ENCODE measurements at regions of chr9 and their contacts with region 1.

Region 1: GRCh38 chr9:5851445-5851844 is 18.5 kb upstream of the ERMP1 start:
- DNase-seq: peak; percentile 65
- ATAC-seq: peak; percentile 87
- H3K4me3 Mint-ChIP-seq: no peak overlapping the region
- H3K27ac Mint-ChIP-seq: peak overlapping the region; percentile 44
- H3K4me1 Mint-ChIP-seq: peaks cover 42% of the 10 kb centered on the region
- H3K27me3 Mint-ChIP-seq: no peaks in the 10 kb centered on the region

Region 2: GRCh38 chr9:5402217-5402616 is 449.2 kb before region 1 on chr9:
- CTCF ChIA-PET with region 1: no interaction called
- POLR2A ChIA-PET with region 1: no interaction called
- intact Hi-C with region 1: no loop called
- DNase-seq: no peak
- ATAC-seq: no peak
- H3K4me3 Mint-ChIP-seq: no peak overlapping the region
- H3K27ac Mint-ChIP-seq: no peak overlapping the region
- H3K4me1 Mint-ChIP-seq: peaks cover 19% of the 10 kb centered on the region
- H3K27me3 Mint-ChIP-seq: no peaks in the 10 kb centered on the region

Region 3: DNA sequence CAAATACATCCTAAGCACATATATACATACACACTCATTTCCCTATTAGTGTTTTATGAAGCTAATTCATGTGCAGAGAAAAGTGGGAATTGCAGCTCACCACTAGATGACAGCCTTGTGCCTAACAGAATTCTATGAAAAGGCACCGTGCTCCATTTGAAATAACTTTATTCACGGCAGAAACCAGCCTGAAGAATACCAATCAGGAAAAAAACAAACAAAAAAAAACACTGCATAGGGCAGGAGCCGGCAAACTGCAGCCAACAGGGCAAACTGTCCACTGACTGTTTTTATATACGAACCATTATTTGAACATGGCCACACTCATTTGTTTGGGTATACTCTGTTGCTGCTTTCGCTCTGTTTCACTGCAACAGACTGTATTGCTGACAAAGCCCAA is 52.1 kb before region 1 on chr9:
- CTCF ChIA-PET with region 1: no interaction called
- POLR2A ChIA-PET with region 1: no interaction called
- intact Hi-C with region 1: loop called in 1 of 2 experiments (anchors 5 kb)
- DNase-seq: no peak
- ATAC-seq: no peak
- H3K4me3 Mint-ChIP-seq: no peak overlapping the region
- H3K27ac Mint-ChIP-seq: no peak overlapping the region
- H3K4me1 Mint-ChIP-seq: peaks cover 22% of the 10 kb centered on the region
- H3K27me3 Mint-ChIP-seq: no peaks in the 10 kb centered on the region

Region 4: DNA sequence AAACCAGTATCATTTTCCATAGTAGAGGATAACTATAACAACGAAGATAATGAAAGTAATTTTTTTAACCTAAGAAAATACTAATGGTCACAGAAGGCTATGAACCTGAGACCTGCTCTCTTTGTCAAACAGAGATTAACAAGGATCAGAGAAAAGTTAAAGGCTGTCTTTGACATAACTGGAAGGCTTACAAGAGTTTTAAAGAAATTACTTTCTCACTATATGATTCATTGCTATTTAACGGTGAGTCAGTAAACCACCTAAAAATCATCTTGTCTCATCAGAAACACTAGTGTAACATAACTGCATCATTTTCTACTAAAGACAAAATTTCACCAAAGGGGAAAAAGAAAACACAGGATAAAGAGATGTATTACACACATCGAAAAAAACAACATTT is 58.5 kb after region 1 on chr9:
- CTCF ChIA-PET with region 1: no interaction called
- POLR2A ChIA-PET with region 1: no interaction called
- intact Hi-C with region 1: loop called (anchors 5 kb)
- DNase-seq: no peak
- ATAC-seq: peak; percentile 80
- H3K4me3 Mint-ChIP-seq: peak overlapping the region; percentile 50
- H3K27ac Mint-ChIP-seq: peak overlapping the region; percentile 92
- H3K4me1 Mint-ChIP-seq: peaks cover 18% of the 10 kb centered on the region
- H3K27me3 Mint-ChIP-seq: no peaks in the 10 kb centered on the region

Region 5: GRCh38 chr9:5920860-5921328 is 69.4 kb after region 1 on chr9:
- CTCF ChIA-PET with region 1: no interaction called
- POLR2A ChIA-PET with region 1: no interaction called
- intact Hi-C with region 1: no loop called
- DNase-seq: peak; percentile 35
- ATAC-seq: peak; percentile 86
- H3K4me3 Mint-ChIP-seq: no peak overlapping the region
- H3K27ac Mint-ChIP-seq: peak overlapping the region; percentile 69
- H3K4me1 Mint-ChIP-seq: peaks cover 11% of the 10 kb centered on the region
- H3K27me3 Mint-ChIP-seq: no peaks in the 10 kb centered on the region

Measured in activated CD4-positive, alpha-beta T cell treated with anti-CD3 and anti-CD28 coated beads for 36 hours (primary cell).